ENCODE measurements at regions of chr7 and their contacts with region 1.

Region 1: DNA sequence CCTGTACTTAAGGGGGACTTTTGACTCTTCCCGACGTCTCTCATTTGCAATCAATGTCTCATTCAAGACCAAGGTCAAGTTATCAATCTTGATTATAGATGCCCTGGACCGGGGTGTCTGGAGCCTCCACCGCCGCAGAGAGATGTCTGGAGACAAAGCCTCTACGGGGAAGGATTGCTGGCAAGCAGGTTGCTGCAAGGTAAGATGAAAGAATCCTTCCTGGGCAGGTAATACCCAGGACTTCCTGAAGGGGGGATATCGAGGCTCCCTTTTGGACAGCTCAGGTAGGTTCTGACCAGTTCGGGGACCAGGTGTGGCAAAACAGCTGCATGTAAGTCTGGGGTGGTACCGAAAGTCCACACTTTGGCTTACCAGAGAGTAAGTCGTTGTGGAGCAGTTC is 12.5 kb upstream of the CUX1 start:
- DNase-seq: no peak
- H3K4me3 ChIP-seq: no peak overlapping the region
- CTCF ChIP-seq: no peak
- POLR2A ChIP-seq: no peak

Region 2: DNA sequence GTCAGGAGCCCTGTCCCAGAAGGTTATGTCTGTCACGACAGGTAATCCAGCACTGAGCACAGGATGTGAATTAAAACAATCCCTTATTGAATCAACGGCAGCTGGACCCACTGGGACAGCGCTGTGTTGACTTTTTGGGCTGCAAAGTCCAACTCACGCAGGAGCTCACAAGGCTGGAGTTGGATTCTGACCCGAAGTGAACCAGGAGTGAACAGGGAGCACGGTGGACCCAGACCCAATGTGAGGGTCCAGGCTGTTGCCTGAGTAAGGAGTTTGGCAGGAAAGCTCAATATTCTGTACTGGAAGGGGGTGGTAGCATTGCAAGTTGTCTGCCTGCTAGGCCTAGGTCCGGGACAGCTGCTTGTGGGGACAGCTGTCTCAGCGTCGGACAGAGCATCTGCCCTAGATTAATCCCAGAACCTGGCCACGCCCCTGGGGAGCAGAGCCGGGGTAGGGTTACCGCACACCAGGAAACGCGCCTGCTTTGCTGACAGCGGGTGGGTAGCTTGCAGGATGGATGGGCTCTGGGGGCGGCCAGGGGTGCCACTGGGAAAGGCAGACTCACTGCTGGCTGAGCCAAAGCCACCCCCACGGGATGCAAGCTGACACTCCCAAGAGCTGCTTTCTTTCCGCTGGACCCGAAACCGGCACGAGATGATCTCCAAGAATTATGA is 418.3 kb before region 1 on chr7:
- intact Hi-C with region 1: no loop called
- DNase-seq: no peak
- H3K4me3 ChIP-seq: no peak overlapping the region
- CTCF ChIP-seq: no peak
- POLR2A ChIP-seq: no peak

Region 3: DNA sequence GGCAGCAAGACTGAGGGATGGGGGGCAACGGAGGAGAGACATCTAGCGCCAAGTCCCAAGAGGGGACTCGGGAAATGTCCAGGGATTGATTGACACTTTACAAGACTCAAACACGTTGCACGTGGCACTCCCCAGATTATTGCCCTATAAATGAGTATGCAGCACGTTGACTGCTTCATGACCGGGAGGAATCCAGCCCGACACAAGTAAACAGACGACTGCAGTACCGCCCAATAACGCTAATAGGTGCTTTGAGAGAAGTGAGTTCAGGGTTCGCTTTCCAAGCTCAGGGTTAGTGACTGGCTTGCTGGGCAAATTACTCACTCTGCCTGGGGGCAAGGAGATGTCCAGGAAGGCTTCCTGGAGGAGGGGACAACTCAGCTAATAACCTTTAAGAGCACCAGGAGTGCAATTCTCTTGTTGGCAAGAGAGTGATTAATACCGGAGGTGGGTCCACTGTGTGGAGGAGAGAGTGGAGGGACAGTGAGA is 102.6 kb before region 1 on chr7:
- intact Hi-C with region 1: loop called (anchors 10 kb)
- DNase-seq: no peak
- H3K4me3 ChIP-seq: no peak overlapping the region
- CTCF ChIP-seq: no peak
- POLR2A ChIP-seq: no peak

Measured in lower leg skin (tissue), 4 donors.